Esophagus muscularis mucosa (tissue), 4 donors: ENCODE measurements at regions of chr12 and their contacts with region 1.

Region 1: DNA sequence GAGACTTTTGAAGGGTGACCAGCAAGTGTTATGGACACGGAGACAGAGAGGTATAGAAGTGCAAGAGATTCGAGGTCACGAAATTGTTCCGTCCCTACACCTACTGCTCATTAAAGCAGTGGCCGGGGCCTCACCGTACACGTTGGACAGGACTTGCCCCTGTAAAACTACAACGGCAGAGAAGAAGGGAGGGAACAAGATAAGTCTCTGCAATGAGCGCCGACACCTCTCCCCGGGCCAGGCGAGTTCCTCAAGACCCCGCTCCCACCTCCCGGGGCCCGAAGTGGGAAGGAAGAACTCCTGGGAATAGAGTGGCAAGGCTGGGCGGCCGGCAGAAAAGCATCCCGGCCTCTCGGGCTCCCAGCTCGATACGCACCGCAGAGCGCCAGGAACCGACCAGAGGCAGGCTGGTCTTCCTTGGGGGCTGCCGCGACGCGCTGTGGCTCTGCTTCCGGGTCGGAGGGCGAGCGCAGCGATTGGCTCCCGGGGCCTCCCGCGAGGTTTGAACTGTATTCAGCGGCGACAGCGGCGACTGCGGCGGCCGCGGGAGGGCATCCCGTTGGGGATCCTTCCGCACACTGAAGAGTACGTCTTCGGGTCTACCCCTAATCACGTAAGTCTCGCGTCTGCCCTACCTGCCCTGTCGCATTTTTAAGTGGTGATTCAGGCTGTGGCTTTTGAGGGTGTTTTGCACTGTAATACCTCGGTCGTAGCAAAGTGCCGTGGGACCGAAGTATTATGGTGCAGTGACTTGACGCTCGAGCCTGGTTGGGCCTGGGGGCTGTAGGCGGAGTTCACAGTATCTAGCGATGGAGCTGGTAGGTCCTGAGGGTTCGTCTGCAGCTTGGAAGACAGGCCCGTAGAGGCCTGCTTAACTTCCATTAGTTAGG is at the starts of genes NUP37 and PARPBP:
- DNase-seq: peak; percentile 94
- H3K4me3 ChIP-seq: peak within 1 kb of the TSS; percentile 67 to 87 (median 80)
- H3K27ac ChIP-seq: peak within 1 kb of the TSS; percentile 84 to 85 (median 84)
- H3K4me1 ChIP-seq: peaks cover 15 to 20% (median 17%) of the 10 kb centered on the region in 4 donors
- H3K27me3 ChIP-seq: no peaks in the 10 kb centered on the region
- CTCF ChIP-seq: peak in 2 of 3 experiments; percentile 12 to 18
- EP300 ChIP-seq: no peak
- POLR2A ChIP-seq: peak; percentile 40
- total RNA-seq, gene NUP37: 9.9 to 23.3 (median 15.4) TPM
- total RNA-seq, gene PARPBP: 0.45 to 0.83 (median 0.64) TPM

Region 2: GRCh38 chr12:101563212-101563611 is 556.7 kb before region 1 on chr12:
- intact Hi-C with region 1: no loop called
- DNase-seq: no peak
- H3K4me3 ChIP-seq: no peak overlapping the region
- H3K27ac ChIP-seq: no peak overlapping the region
- H3K4me1 ChIP-seq: peaks cover 0 to 7% (median 3%) of the 10 kb centered on the region in 4 donors
- H3K27me3 ChIP-seq: no peaks in the 10 kb centered on the region
- CTCF ChIP-seq: no peak
- EP300 ChIP-seq: no peak
- POLR2A ChIP-seq: no peak

Region 3: DNA sequence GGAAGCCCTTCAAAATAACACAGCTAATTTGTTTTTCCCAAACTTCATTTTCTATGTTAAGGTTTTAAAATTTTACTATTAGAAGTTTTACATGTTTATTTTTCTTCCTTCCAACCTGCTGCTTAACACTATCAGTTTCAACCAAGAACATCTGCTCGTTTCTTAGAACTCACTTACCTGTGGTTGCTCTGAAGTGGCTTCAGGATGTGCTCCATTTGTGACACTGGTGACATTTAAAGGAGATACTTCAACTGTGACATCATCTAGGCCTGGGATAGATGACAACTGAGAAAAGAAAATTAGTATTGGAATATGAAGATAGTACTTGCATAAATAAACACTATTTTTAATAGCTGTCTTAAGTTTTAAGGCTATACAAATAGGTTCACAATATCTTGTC is 76.0 kb before region 1 on chr12:
- intact Hi-C with region 1: no loop called
- DNase-seq: no peak
- H3K4me3 ChIP-seq: no peak overlapping the region
- H3K27ac ChIP-seq: no peak overlapping the region
- H3K4me1 ChIP-seq: no peaks in the 10 kb centered on the region
- H3K27me3 ChIP-seq: no peaks in the 10 kb centered on the region
- CTCF ChIP-seq: no peak
- EP300 ChIP-seq: no peak
- POLR2A ChIP-seq: no peak

Region 4: GRCh38 chr12:102067574-102068258 is 52.2 kb before region 1 on chr12:
- intact Hi-C with region 1: loop called (anchors 5 kb)
- DNase-seq: no peak
- H3K4me3 ChIP-seq: no peak overlapping the region
- H3K27ac ChIP-seq: no peak overlapping the region
- H3K4me1 ChIP-seq: peaks cover 0 to 9% (median 1%) of the 10 kb centered on the region in 4 donors
- H3K27me3 ChIP-seq: no peaks in the 10 kb centered on the region
- CTCF ChIP-seq: no peak
- EP300 ChIP-seq: no peak
- POLR2A ChIP-seq: no peak

Region 5: DNA sequence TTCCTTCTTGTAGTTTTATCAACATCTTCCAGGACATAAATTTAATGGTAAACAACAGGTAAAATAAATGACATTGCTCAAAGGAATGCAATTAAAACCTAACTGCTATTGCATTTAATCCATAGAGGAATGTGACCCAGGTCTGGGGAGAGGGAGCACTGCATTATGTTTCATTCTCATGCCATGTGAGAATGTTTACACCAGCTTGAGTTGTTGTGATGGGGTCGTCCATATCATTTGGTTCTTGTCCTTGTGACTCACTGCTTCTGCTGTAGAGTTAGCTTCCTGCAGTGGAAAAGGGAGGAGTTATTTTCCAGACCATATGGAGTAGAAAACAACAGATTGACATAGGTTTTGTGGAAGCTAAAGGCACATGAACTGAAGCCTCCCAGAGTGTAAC is 207.1 kb after region 1 on chr12:
- intact Hi-C with region 1: no loop called
- DNase-seq: no peak
- H3K4me3 ChIP-seq: no peak overlapping the region
- H3K27ac ChIP-seq: no peak overlapping the region
- H3K4me1 ChIP-seq: no peaks in the 10 kb centered on the region
- H3K27me3 ChIP-seq: no peaks in the 10 kb centered on the region
- CTCF ChIP-seq: no peak
- EP300 ChIP-seq: no peak
- POLR2A ChIP-seq: no peak